ENCODE measurements at regions of chr19 and their contacts with region 1.

Region 1: GRCh38 chr19:506404-507285 is 652 bp upstream of the TPGS1 start:
- DNase-seq: peak; percentile 85 to 98 (median 92)
- ATAC-seq: peak; percentile 52
- H3K4me3 ChIP-seq: peak overlapping the region; percentile 91
- H3K4me3 Mint-ChIP-seq: peak overlapping the region; percentile 98
- H3K27ac ChIP-seq: peak overlapping the region; percentile 88 to 99
- H3K27ac Mint-ChIP-seq: peak overlapping the region; percentile 94
- H3K4me1 ChIP-seq: peaks cover 55% of the 10 kb centered on the region
- H3K4me1 Mint-ChIP-seq: peaks cover 37% of the 10 kb centered on the region
- H3K27me3 ChIP-seq: no peaks in the 10 kb centered on the region
- H3K27me3 Mint-ChIP-seq: no peaks in the 10 kb centered on the region
- CTCF ChIP-seq: peak; percentile 99

Region 2: GRCh38 chr19:294946-295686 is 211.5 kb before region 1 on chr19:
- CTCF ChIA-PET with region 1: no interaction called
- POLR2A ChIA-PET with region 1: no interaction called
- intact Hi-C with region 1: loop called in 1 of 2 experiments (anchors 10 kb)
- DNase-seq: peak in 13 of 14 experiments; percentile 21 to 66 (median 35)
- ATAC-seq: peak; percentile 72
- H3K4me3 ChIP-seq: no peak overlapping the region
- H3K4me3 Mint-ChIP-seq: peak overlapping the region; percentile 23
- H3K27ac ChIP-seq: no peak overlapping the region
- H3K27ac Mint-ChIP-seq: no peak overlapping the region
- H3K4me1 ChIP-seq: peaks cover 20% of the 10 kb centered on the region
- H3K4me1 Mint-ChIP-seq: peaks cover 15% of the 10 kb centered on the region
- H3K27me3 ChIP-seq: peaks cover 33 to 39% of the 10 kb centered on the region in 2 experiments
- H3K27me3 Mint-ChIP-seq: peaks cover 43% of the 10 kb centered on the region
- CTCF ChIP-seq: peak; percentile 65

Region 3: GRCh38 chr19:488505-489417 is 17.9 kb before region 1 on chr19:
- CTCF ChIA-PET with region 1: interaction called, 29 read pairs
- POLR2A ChIA-PET with region 1: interaction called, 34 read pairs
- intact Hi-C with region 1: loop called (anchors 1 to 2 kb)
- DNase-seq: peak; percentile 85 to 97 (median 92)
- ATAC-seq: peak; percentile 96
- H3K4me3 ChIP-seq: peak overlapping the region; percentile 65
- H3K4me3 Mint-ChIP-seq: peak overlapping the region; percentile 69
- H3K27ac ChIP-seq: peak overlapping the region; percentile 74 to 79
- H3K27ac Mint-ChIP-seq: peak overlapping the region; percentile 42
- H3K4me1 ChIP-seq: peaks cover 15% of the 10 kb centered on the region
- H3K4me1 Mint-ChIP-seq: no peaks in the 10 kb centered on the region
- H3K27me3 ChIP-seq: peaks cover 8 to 11% of the 10 kb centered on the region in 2 experiments
- H3K27me3 Mint-ChIP-seq: peaks cover 16% of the 10 kb centered on the region
- CTCF ChIP-seq: no peak

Region 4: GRCh38 chr19:518603-519231 is 12.1 kb after region 1 on chr19:
- CTCF ChIA-PET with region 1: interaction called, 17 read pairs
- POLR2A ChIA-PET with region 1: interaction called, 35 read pairs
- intact Hi-C with region 1: no loop called
- DNase-seq: peak; percentile 53 to 87 (median 67)
- ATAC-seq: peak; percentile 91
- H3K4me3 ChIP-seq: no peak overlapping the region
- H3K4me3 Mint-ChIP-seq: no peak overlapping the region
- H3K27ac ChIP-seq: peak overlapping the region in 1 of 2 donors; percentile 29
- H3K27ac Mint-ChIP-seq: no peak overlapping the region
- H3K4me1 ChIP-seq: peaks cover 31% of the 10 kb centered on the region
- H3K4me1 Mint-ChIP-seq: peaks cover 12% of the 10 kb centered on the region
- H3K27me3 ChIP-seq: no peaks in the 10 kb centered on the region
- H3K27me3 Mint-ChIP-seq: no peaks in the 10 kb centered on the region
- CTCF ChIP-seq: peak; percentile 17

Region 5: DNA sequence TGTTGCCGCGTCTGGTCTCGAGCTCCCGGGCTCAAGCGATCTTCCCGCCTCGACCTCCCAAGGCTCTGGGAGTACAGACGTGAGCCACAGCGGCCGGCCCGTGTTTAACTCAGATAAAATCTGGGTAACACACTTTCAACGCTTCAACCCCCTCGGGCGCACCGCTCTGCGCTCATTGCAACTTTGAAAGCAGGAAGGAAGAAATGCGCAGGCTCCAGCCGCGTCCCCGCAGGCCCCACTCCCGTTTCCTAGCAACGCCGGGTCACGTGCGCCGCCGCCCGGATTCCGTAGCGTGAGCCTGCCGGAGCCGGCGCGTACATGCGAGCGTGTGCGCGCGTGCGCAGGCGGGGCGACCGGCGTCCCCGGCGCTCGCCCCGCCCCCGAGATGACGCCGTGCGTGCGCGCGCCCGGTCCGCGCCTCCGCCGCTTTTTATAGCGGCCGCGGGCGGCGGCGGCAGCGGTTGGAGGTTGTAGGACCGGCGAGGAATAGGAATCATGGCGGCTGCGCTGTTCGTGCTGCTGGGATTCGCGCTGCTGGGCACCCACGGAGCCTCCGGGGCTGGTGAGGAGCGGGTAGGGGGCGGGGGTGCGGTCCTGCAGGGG is 65.6 kb after region 1 on chr19 and contains the start of gene BSG:
- CTCF ChIA-PET with region 1: interaction called, 9 read pairs
- POLR2A ChIA-PET with region 1: interaction called, 15 read pairs
- intact Hi-C with region 1: loop called (anchors 1 to 5 kb)
- DNase-seq: peak; percentile 97 to 100 (median 98)
- ATAC-seq: peak; percentile 83
- H3K4me3 ChIP-seq: peak within 1 kb of the TSS; percentile 94
- H3K4me3 Mint-ChIP-seq: peak within 1 kb of the TSS; percentile 99
- H3K27ac ChIP-seq: peak within 1 kb of the TSS; percentile 69 to 87
- H3K27ac Mint-ChIP-seq: peak within 1 kb of the TSS; percentile 95
- H3K4me1 ChIP-seq: peaks cover 60% of the 10 kb centered on the region
- H3K4me1 Mint-ChIP-seq: peaks cover 40% of the 10 kb centered on the region
- H3K27me3 ChIP-seq: no peaks in the 10 kb centered on the region
- H3K27me3 Mint-ChIP-seq: no peaks in the 10 kb centered on the region
- CTCF ChIP-seq: no peak
- total RNA-seq, gene BSG: 68.7 to 71.6 TPM

Region 6: GRCh38 chr19:940591-941291 is 434.1 kb after region 1 on chr19:
- CTCF ChIA-PET with region 1: no interaction called
- POLR2A ChIA-PET with region 1: no interaction called
- intact Hi-C with region 1: no loop called
- DNase-seq: peak; percentile 46 to 94 (median 66)
- ATAC-seq: peak; percentile 79
- H3K4me3 ChIP-seq: peak overlapping the region; percentile 52
- H3K4me3 Mint-ChIP-seq: peak overlapping the region; percentile 78
- H3K27ac ChIP-seq: no peak overlapping the region
- H3K27ac Mint-ChIP-seq: peak overlapping the region; percentile 74
- H3K4me1 ChIP-seq: peaks cover 42% of the 10 kb centered on the region
- H3K4me1 Mint-ChIP-seq: peaks cover 30% of the 10 kb centered on the region
- H3K27me3 ChIP-seq: no peaks in the 10 kb centered on the region
- H3K27me3 Mint-ChIP-seq: no peaks in the 10 kb centered on the region
- CTCF ChIP-seq: no peak